Activated T-helper 2 cell treated with anti-CD3 and anti-CD28 coated beads, Interferon-gamma antibody, Interleukin-2, Interleukin-4, amounts not matched to agents 10 μg/mL and 5 μg/mL and 100 μg/mL, durations not matched to agents 14 hours and 24 hours and 36 hours (primary cell): ENCODE measurements at regions of chr2 and their contacts with region 1.

Region 1: GRCh38 chr2:85813982-85814801 is 60.4 kb downstream of the ATOH8 start:
- DNase-seq: peak; percentile 68
- H3K4me3 Mint-ChIP-seq: no peak overlapping the region
- H3K27ac Mint-ChIP-seq: no peak overlapping the region
- H3K4me1 Mint-ChIP-seq: no peaks in the 10 kb centered on the region
- H3K27me3 Mint-ChIP-seq: peaks cover 8% of the 10 kb centered on the region

Region 2: GRCh38 chr2:85678794-85679672 is 135.2 kb before region 1 on chr2:
- intact Hi-C with region 1: loop called (anchors 5 kb)
- DNase-seq: peak; percentile 69
- H3K4me3 Mint-ChIP-seq: no peak overlapping the region
- H3K27ac Mint-ChIP-seq: no peak overlapping the region
- H3K4me1 Mint-ChIP-seq: peaks cover 26% of the 10 kb centered on the region
- H3K27me3 Mint-ChIP-seq: peaks cover 7% of the 10 kb centered on the region

Region 3: GRCh38 chr2:85728883-85729824 is 85.0 kb before region 1 on chr2:
- intact Hi-C with region 1: loop called (anchors 1 kb)
- DNase-seq: peak; percentile 47
- H3K4me3 Mint-ChIP-seq: no peak overlapping the region
- H3K27ac Mint-ChIP-seq: no peak overlapping the region
- H3K4me1 Mint-ChIP-seq: peaks cover 9% of the 10 kb centered on the region
- H3K27me3 Mint-ChIP-seq: peaks cover 28% of the 10 kb centered on the region

Region 4: DNA sequence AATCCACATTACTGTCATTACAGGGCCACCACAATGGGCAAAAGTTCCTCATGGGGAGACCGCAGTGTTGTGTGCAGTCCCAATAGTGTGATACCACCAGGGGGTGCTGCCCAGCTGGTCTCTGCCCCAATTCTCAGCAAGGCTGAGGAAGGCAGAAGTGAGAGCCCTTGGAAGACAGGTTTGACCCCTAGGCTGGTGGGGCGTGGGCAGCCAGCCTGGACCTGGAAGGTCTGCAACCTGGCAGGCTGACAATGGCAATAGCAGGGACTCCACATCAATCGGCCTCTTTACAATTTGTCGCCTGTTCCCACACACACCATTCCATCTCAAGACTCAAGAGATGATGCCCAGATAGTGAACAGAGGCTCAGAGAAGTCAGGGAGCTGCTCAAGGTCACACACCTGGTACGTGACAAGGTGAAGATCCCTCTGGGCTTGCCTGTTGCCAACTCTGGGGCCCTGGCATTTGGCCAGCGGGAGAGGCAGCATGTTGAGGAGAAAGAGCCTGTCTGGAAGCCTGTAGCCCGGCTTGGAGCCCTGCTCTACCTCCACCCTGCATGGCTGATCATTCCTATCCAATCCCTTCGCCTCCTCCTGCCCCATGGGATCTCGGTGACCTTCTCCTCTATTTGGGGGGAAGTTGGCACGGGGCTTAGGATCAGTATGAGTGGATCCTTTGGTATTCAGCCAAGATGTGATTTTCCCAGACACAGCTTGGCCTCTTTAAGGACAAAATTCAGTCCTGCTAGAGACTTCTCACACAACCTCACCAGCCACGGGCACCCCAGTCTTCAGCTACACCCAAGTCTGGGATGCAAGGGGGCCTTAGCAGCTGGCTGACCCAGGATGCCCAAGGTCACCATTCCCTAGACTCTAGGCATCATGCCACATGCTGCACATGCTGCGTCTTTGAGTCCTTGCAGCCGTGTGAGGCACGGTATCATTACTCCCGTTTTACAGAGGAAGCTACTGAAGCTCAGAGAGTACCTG is 63.3 kb before region 1 on chr2:
- intact Hi-C with region 1: loop called (anchors 1 kb)
- DNase-seq: peak; percentile 35
- H3K4me3 Mint-ChIP-seq: no peak overlapping the region
- H3K27ac Mint-ChIP-seq: no peak overlapping the region
- H3K4me1 Mint-ChIP-seq: peaks cover 14% of the 10 kb centered on the region
- H3K27me3 Mint-ChIP-seq: peaks cover 80% of the 10 kb centered on the region

Region 5: DNA sequence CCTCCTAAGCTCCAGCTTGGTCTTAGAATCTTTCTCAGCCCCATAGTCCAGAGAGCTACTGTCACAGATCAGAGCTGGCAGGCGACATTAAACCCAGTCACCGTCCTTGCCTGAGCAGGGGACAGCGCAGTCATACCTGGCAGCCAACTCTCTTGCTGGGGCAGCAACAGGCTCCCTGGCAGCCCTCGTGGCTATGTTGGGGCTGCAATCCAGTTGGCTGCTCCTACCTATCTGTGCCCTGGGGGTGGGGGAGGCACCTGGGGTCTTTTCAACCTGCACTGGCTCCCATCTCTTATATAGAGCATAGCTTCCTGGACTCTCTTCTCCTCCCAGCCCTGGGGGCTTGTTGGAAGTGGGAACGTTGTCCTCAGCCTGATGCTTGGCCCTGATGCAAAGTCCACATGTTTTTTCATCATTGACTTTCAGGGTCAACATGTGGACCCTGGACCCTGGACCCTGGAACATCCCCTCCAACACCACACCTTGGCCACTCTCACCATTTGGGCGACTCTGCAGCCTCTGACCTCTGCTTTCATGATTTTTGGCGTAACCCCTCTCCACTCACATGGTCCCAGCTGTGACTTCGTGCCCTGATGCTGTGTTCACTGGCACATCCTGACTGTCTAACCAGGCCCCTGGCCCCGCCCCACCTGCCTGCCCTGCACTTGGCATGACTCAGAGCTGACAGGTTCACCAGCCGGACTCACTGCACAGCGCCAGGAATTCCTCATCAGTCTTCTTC is 14.8 kb before region 1 on chr2:
- intact Hi-C with region 1: no loop called
- DNase-seq: no peak
- H3K4me3 Mint-ChIP-seq: no peak overlapping the region
- H3K27ac Mint-ChIP-seq: no peak overlapping the region
- H3K4me1 Mint-ChIP-seq: peaks cover 2% of the 10 kb centered on the region
- H3K27me3 Mint-ChIP-seq: peaks cover 12% of the 10 kb centered on the region